ENCODE measurements at regions of chr2 and their contacts with region 1.

Region 1: DNA sequence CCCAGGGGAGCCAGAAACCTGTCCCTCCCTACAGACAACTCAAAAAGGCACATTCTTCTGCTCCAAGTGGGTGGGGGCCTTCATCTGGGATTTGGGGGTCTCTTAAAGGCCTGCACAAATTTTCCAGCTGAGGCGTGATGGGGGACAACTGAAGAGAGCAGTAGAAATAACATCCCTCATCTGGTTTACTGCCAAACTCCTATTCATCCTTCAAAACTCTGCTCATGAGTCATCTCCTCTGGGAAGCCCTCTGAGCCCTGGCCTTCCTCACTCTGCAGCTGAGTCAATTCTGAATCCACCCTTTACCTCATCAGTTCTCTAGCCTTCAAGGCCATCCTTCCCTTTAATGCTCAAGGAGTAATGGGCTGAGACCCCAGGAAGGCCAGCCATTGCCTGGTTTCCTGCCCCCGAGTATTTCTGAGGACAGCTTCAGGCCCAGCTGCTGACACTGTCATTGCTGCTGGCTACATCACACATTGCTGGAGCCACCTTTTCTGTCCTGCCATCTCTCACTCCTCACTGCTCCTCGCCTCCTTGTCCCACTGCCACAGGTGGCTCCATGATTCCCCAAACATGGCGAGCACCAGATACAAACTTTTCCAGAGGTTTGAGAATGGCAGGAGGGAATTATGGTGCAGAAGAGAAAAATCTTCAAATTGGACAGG is 32.2 kb upstream of the GLI2 start:
- DNase-seq: no peak
- ATAC-seq: no peak
- H3K4me3 ChIP-seq: no peak overlapping the region
- H3K27ac ChIP-seq: no peak overlapping the region
- H3K4me1 ChIP-seq: no peaks in the 10 kb centered on the region
- H3K27me3 ChIP-seq: no peaks in the 10 kb centered on the region
- CTCF ChIP-seq: no peak
- POLR2A ChIP-seq: no peak

Region 2: DNA sequence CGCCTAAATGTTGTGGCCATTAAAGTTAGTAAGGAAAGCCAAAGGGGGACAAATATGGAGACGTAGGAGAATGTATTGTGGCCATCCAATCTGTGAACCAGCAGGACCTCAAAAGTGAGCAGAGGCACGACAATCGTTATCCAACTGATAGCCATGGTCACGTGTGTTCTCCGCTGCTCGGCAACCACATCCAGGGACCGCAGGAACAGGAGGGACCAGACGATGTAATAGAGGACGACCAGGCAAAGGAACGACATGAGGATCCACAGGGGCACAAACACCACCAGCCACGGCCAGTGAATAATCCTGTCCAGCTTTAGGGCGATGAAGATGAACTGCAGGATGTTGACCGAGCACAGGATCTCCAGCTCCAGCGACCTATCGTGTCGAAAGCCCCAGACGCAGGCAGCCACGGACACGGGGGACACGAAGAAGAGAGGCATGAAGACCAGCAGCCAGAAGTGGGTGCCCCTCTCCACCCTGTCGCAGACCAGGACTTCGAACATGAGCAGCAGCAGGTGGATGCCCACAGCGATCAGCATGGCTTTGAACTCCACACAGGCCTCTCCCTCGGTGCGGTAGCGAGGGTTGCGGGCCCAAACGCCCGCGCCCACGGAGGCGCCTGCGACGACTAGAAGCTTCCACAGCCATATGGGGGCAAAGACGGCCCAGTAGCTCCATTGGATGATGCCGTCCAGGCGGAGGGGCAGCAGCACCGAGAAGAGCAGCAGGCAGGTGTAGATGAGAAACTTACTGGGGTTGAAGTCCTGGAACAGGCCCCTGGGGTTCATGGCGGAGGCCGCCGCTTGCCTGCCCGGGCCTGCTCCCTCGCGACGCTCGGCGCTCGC is 481.1 kb before region 1 on chr2:
- intact Hi-C with region 1: no loop called
- DNase-seq: peak in 2 of 3 donors; percentile 44 to 57
- ATAC-seq: no peak
- H3K4me3 ChIP-seq: peak overlapping the region; percentile 67 to 82 (median 69)
- H3K27ac ChIP-seq: peak overlapping the region; percentile 85 to 96 (median 92)
- H3K4me1 ChIP-seq: peaks cover 0 to 24% (median 6%) of the 10 kb centered on the region in 4 donors
- H3K27me3 ChIP-seq: no peaks in the 10 kb centered on the region
- CTCF ChIP-seq: no peak
- POLR2A ChIP-seq: no peak

Region 3: GRCh38 chr2:120323214-120323613 is 380.2 kb before region 1 on chr2:
- intact Hi-C with region 1: no loop called
- DNase-seq: peak; percentile 76 to 86 (median 84)
- ATAC-seq: peak; percentile 89 to 96 (median 92)
- H3K4me3 ChIP-seq: no peak overlapping the region
- H3K27ac ChIP-seq: no peak overlapping the region
- H3K4me1 ChIP-seq: peaks cover 0 to 10% (median 2%) of the 10 kb centered on the region in 4 donors
- H3K27me3 ChIP-seq: no peaks in the 10 kb centered on the region
- CTCF ChIP-seq: no peak
- POLR2A ChIP-seq: no peak

Region 4: GRCh38 chr2:120566331-120567035 is 137.0 kb before region 1 on chr2:
- intact Hi-C with region 1: no loop called
- DNase-seq: peak in 2 of 3 donors; percentile 13 to 25
- ATAC-seq: peak in 1 of 4 donors; percentile 8
- H3K4me3 ChIP-seq: no peak overlapping the region
- H3K27ac ChIP-seq: no peak overlapping the region
- H3K4me1 ChIP-seq: peaks cover 0 to 9% (median 4%) of the 10 kb centered on the region in 4 donors
- H3K27me3 ChIP-seq: no peaks in the 10 kb centered on the region
- CTCF ChIP-seq: no peak
- POLR2A ChIP-seq: no peak

Region 5: DNA sequence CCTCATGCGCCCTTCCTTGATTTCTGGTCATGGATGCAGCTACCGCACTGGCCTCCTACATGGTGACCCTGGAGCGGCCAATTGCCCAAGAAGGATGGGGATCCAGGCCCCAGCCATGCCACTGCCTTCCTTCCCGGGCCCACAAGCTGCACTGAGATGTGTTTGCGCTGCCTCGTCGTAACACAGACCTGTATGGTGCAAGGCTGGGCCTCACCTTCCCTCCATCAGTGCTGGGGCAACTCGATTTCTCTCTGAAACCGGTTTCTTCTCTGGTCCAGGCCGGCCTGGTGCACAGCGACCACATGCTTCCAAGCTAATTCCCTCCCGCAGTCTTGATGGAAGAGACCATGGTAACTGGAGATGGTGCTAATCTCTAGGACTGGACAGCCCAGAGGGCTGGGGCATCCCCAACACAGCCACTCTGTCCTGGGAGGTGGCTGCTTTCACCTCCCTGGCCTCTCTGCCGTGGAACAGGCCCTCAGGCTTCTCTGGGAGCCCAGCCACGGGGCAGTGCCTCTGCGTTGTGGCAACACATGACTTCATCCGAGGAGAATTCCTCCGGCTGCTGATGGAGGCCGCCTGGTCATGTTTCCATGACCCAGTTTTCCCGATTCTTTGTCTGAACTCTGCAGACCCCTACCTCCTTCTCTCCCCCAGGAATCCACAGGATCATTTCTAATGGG is 216.4 kb after region 1 on chr2:
- intact Hi-C with region 1: no loop called
- DNase-seq: peak in 1 of 3 donors; percentile 38
- ATAC-seq: no peak
- H3K4me3 ChIP-seq: no peak overlapping the region
- H3K27ac ChIP-seq: no peak overlapping the region
- H3K4me1 ChIP-seq: no peaks in the 10 kb centered on the region
- H3K27me3 ChIP-seq: no peaks in the 10 kb centered on the region
- CTCF ChIP-seq: no peak
- POLR2A ChIP-seq: no peak

Region 6: DNA sequence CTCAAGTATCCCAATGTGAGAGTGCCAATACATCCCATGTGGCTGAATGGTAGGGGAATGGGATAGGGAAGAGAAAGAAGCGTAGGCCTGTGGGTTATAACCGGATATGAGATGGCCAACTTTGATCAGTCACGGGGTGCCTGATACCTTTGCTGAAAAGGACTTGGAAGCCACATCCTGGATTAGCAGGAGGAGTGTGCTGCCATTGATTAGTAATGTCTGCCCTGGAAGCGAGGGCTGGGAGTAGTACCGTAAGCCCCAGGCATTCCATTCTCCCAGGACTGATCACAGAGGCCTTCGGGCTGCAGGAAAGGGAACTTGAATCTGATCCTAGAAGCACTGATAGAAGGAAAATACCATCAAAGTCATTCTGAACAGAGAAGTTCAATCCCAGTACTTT is 363.1 kb after region 1 on chr2:
- intact Hi-C with region 1: loop called in 1 of 2 experiments (anchors 5 kb)
- DNase-seq: no peak
- ATAC-seq: no peak
- H3K4me3 ChIP-seq: no peak overlapping the region
- H3K27ac ChIP-seq: no peak overlapping the region
- H3K4me1 ChIP-seq: no peaks in the 10 kb centered on the region
- H3K27me3 ChIP-seq: no peaks in the 10 kb centered on the region
- CTCF ChIP-seq: no peak
- POLR2A ChIP-seq: no peak

Measured in right lobe of liver (tissue), 6 donors.